ENCODE measurements at regions of chr18 and their contacts with region 1.

Region 1: DNA sequence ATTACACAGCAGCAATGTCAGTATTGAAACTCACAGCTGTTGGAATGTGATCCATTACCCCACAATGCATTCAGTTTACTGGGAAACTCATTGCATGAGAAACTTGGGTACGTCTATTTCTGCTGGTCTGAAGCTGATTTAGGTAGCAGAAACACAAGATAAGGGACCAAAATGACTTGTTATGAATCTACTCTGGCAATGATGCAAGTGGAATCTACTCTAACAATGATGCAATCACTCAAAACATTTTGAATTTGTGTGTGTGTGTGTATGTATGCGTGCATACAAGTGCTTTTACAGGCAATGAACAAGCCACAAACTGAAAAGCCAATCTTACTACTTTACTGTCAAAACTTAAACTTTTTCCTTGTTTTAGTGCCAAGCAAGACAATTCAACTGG is 406.7 kb downstream of the ADCYAP1 start:
- DNase-seq: no peak
- ATAC-seq: no peak
- H3K4me3 ChIP-seq: no peak overlapping the region
- H3K27ac ChIP-seq: no peak overlapping the region
- H3K4me1 ChIP-seq: no peaks in the 10 kb centered on the region
- H3K27me3 ChIP-seq: no peaks in the 10 kb centered on the region
- CTCF ChIP-seq: no peak
- POLR2A ChIP-seq: no peak

Region 2: DNA sequence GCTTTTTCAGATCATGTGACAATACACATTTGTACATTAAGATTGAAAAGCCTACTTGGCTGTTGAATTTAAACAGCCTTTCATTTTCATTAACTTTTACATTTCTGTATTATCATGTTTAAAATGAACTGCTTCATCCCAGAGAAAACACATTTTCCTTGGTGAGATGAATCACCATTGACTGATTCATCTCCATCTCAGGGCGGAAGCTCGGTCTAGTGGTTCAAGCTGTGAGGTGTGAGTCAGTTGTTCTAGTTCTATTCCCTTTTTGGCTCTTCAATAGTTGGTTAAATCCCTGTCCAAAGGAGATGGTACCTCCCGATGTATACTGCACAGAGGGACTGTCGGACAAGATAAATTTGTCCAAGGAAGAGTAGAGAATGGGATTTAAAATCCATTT is 217.0 kb before region 1 on chr18:
- intact Hi-C with region 1: no loop called
- DNase-seq: no peak
- ATAC-seq: no peak
- H3K4me3 ChIP-seq: no peak overlapping the region
- H3K27ac ChIP-seq: no peak overlapping the region
- H3K4me1 ChIP-seq: no peaks in the 10 kb centered on the region
- H3K27me3 ChIP-seq: peaks cover 0 to 3% (median 0%) of the 10 kb centered on the region in 9 donors
- CTCF ChIP-seq: no peak
- POLR2A ChIP-seq: no peak

Region 3: GRCh38 chr18:1173593-1173992 is 137.8 kb before region 1 on chr18:
- intact Hi-C with region 1: no loop called
- DNase-seq: no peak
- ATAC-seq: no peak
- H3K4me3 ChIP-seq: no peak overlapping the region
- H3K27ac ChIP-seq: no peak overlapping the region
- H3K4me1 ChIP-seq: no peaks in the 10 kb centered on the region
- H3K27me3 ChIP-seq: no peaks in the 10 kb centered on the region
- CTCF ChIP-seq: no peak
- POLR2A ChIP-seq: no peak

Region 4: GRCh38 chr18:1253827-1254226 is 57.5 kb before region 1 on chr18:
- intact Hi-C with region 1: loop called in 1 of 10 experiments (anchors 10 kb)
- DNase-seq: no peak
- ATAC-seq: no peak
- H3K4me3 ChIP-seq: no peak overlapping the region
- H3K27ac ChIP-seq: no peak overlapping the region
- H3K4me1 ChIP-seq: no peaks in the 10 kb centered on the region
- H3K27me3 ChIP-seq: no peaks in the 10 kb centered on the region
- CTCF ChIP-seq: no peak
- POLR2A ChIP-seq: no peak

Region 5: GRCh38 chr18:1408376-1408775 is 97.0 kb after region 1 on chr18:
- intact Hi-C with region 1: no loop called
- DNase-seq: no peak
- ATAC-seq: no peak
- H3K4me3 ChIP-seq: no peak overlapping the region
- H3K27ac ChIP-seq: no peak overlapping the region
- H3K4me1 ChIP-seq: no peaks in the 10 kb centered on the region
- H3K27me3 ChIP-seq: no peaks in the 10 kb centered on the region
- CTCF ChIP-seq: no peak
- POLR2A ChIP-seq: no peak

Measured in heart left ventricle (tissue), 16 donors.